ENCODE measurements at regions of chrX and their contacts with region 1.

Region 1: DNA sequence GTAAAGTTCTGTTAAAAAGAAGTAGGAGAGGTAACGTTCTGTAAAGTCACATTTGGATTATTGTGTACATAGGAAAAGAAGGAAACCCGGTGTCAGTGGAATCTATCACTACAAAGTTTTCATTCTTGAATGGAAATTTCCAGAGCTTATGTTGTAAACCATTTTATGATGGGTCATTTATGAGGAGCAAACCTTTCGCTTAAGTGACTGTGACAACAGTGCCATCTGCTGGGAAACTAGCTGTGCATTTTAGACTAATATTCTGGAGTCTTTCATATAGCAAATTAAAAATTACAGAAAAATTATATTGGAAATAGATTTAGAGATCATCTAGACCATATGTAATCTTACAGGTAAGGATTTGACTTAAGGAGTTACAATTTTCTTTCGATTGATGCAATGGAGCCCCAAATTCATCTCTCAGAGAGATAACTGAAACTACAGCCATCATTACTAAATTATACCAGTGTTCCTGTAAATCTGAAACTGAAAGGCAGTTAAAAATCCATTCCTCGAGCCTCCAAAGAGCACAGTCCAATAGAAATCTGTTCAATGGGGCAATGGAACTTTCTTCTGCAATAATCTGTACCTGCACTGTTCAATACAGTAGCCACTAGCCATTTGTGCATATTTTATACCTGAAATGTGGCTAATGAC is 26.9 kb downstream of the ASB9 start:
- DNase-seq: peak; percentile 43
- ATAC-seq: peak; percentile 70
- H3K4me3 ChIP-seq: no peak overlapping the region
- H3K27ac ChIP-seq: no peak overlapping the region
- H3K4me1 ChIP-seq: no peaks in the 10 kb centered on the region
- H3K27me3 ChIP-seq: no peaks in the 10 kb centered on the region
- CTCF ChIP-seq: peak; percentile 33 to 55 (median 49); a peak in 4 of 6 replicates
- POLR2A ChIP-seq: no peak
- RAD21 ChIP-seq: peak; percentile 75

Region 2: GRCh38 chrX:14039344-14039743 is 1203.7 kb before region 1 on chrX:
- CTCF ChIA-PET with region 1: interaction called, 5 read pairs
- POLR2A ChIA-PET with region 1: no interaction called
- RAD21 ChIA-PET with region 1: no interaction called
- intact Hi-C with region 1: loop called (anchors 1 kb)
- DNase-seq: no peak
- ATAC-seq: peak; percentile 78
- H3K4me3 ChIP-seq: no peak overlapping the region
- H3K27ac ChIP-seq: no peak overlapping the region
- H3K4me1 ChIP-seq: no peaks in the 10 kb centered on the region
- H3K27me3 ChIP-seq: no peaks in the 10 kb centered on the region
- CTCF ChIP-seq: peak; percentile 27 to 61 (median 43); a peak in 4 of 6 replicates
- POLR2A ChIP-seq: no peak
- RAD21 ChIP-seq: peak; percentile 81

Region 3: GRCh38 chrX:14051416-14051815 is 1191.6 kb before region 1 on chrX:
- CTCF ChIA-PET with region 1: no interaction called
- POLR2A ChIA-PET with region 1: no interaction called
- RAD21 ChIA-PET with region 1: no interaction called
- intact Hi-C with region 1: loop called (anchors 1 kb)
- DNase-seq: no peak
- ATAC-seq: no peak
- H3K4me3 ChIP-seq: no peak overlapping the region
- H3K27ac ChIP-seq: no peak overlapping the region
- H3K4me1 ChIP-seq: no peaks in the 10 kb centered on the region
- H3K27me3 ChIP-seq: no peaks in the 10 kb centered on the region
- CTCF ChIP-seq: no peak
- POLR2A ChIP-seq: no peak
- RAD21 ChIP-seq: peak; percentile 60

Region 4: GRCh38 chrX:14095702-14096101 is 1147.3 kb before region 1 on chrX:
- CTCF ChIA-PET with region 1: no interaction called
- POLR2A ChIA-PET with region 1: no interaction called
- RAD21 ChIA-PET with region 1: no interaction called
- intact Hi-C with region 1: loop called (anchors 1 kb)
- DNase-seq: peak; percentile 57
- ATAC-seq: peak; percentile 97
- H3K4me3 ChIP-seq: no peak overlapping the region
- H3K27ac ChIP-seq: no peak overlapping the region
- H3K4me1 ChIP-seq: no peaks in the 10 kb centered on the region
- H3K27me3 ChIP-seq: no peaks in the 10 kb centered on the region
- CTCF ChIP-seq: peak; percentile 37 to 67 (median 60); a peak in 4 of 6 replicates
- POLR2A ChIP-seq: no peak
- RAD21 ChIP-seq: peak; percentile 82

Region 5: DNA sequence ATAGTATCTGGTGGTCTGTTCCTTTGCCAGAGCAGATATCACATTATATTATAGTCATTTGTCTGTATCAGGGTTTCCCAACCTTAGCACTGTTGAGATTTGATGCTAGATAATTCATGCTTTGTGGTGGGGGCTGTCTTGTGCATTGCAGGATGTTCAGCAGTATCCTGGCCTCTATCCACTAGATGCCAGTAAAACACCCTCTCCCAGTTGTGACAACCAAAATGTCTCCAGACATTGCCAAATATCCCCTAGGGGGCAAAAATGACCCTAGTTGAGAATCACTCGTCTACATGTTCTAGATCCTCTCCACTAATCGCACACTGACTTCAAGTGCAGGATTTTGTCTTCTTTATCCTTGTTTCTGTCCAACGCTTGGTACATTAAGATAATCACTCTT is 530.9 kb before region 1 on chrX:
- CTCF ChIA-PET with region 1: no interaction called
- POLR2A ChIA-PET with region 1: no interaction called
- RAD21 ChIA-PET with region 1: no interaction called
- intact Hi-C with region 1: loop called (anchors 10 kb)
- DNase-seq: no peak
- ATAC-seq: no peak
- H3K4me3 ChIP-seq: no peak overlapping the region
- H3K27ac ChIP-seq: no peak overlapping the region
- H3K4me1 ChIP-seq: no peaks in the 10 kb centered on the region
- H3K27me3 ChIP-seq: no peaks in the 10 kb centered on the region
- CTCF ChIP-seq: peak; percentile 8 to 42 (median 10); a peak in 1 of 6 replicates
- POLR2A ChIP-seq: no peak
- RAD21 ChIP-seq: peak; percentile 42

Region 6: GRCh38 chrX:15107367-15107988 is 135.5 kb before region 1 on chrX:
- CTCF ChIA-PET with region 1: interaction called, 4 read pairs
- POLR2A ChIA-PET with region 1: no interaction called
- RAD21 ChIA-PET with region 1: no interaction called
- intact Hi-C with region 1: loop called (anchors 5 kb)
- DNase-seq: no peak
- ATAC-seq: peak; percentile 49; the same call in 1 of the 2 replicates
- H3K4me3 ChIP-seq: no peak overlapping the region
- H3K27ac ChIP-seq: no peak overlapping the region
- H3K4me1 ChIP-seq: no peaks in the 10 kb centered on the region
- H3K27me3 ChIP-seq: no peaks in the 10 kb centered on the region
- CTCF ChIP-seq: 0 out of 6 replicates have a peak, but pooled peaks of 2 of the 3 experiments have one; percentile 6 to 14
- POLR2A ChIP-seq: no peak
- RAD21 ChIP-seq: peak; percentile 43

Region 7: DNA sequence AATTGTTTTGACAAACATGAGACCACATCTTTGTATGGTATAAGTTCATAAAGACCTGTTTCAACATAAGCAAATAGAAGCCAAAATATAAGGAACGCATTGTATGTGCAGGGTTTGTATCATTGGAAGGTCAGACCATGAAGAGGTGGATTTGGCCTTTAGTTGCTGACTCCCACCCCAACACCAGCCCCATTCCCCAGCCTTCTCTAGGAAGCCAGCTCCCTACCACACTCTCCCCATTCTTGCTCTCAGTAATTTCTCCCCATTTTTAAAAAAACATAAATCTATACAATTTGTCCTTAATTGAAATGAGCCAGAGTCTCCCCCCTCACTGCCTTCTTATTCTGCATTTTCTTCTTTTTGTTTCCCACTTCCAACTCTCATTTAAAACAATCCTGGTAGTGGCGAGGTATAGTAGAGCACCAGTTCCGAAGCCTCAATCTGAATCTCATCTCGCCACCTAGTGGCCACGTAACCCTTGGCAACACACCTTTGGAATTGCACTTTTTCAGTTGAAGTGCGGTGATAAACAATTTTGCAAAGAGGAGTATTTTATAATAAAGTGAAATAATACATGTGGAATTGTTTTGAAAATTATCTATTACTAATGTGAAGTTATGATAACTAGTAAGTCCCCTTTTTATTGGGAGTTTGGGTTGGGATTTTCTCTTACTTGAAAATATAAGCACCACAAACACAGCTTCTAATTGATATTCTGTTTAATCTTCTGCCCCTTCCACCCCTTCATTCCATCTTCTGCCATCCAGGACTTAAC is 99.8 kb before region 1 on chrX:
- CTCF ChIA-PET with region 1: interaction called, 5 read pairs
- POLR2A ChIA-PET with region 1: no interaction called
- RAD21 ChIA-PET with region 1: no interaction called
- intact Hi-C with region 1: loop called (anchors 10 kb)
- DNase-seq: peak; percentile 34
- ATAC-seq: peak; percentile 91
- H3K4me3 ChIP-seq: no peak overlapping the region
- H3K27ac ChIP-seq: no peak overlapping the region
- H3K4me1 ChIP-seq: no peaks in the 10 kb centered on the region
- H3K27me3 ChIP-seq: no peaks in the 10 kb centered on the region
- CTCF ChIP-seq: peak; percentile 52 to 65 (median 63); a peak in 5 of 6 replicates
- POLR2A ChIP-seq: no peak
- RAD21 ChIP-seq: peak; percentile 69

Measured in HCT116 (cell line).